Activated CD4-positive, alpha-beta memory T cell treated with anti-CD3 and anti-CD28 coated beads, Interleukin-2, amount 10 ng/mL, durations not matched to agents 7 days and 5 days (primary cell): ENCODE measurements at regions of chr3 and their contacts with region 1.

Region 1: GRCh38 chr3:36944012-36944640 is 728 bp downstream of the TRANK1 start:
- DNase-seq: peak; percentile 30
- H3K4me3 Mint-ChIP-seq: peak overlapping the region; percentile 74
- H3K27ac Mint-ChIP-seq: no peak overlapping the region
- H3K4me1 Mint-ChIP-seq: peaks cover 9% of the 10 kb centered on the region
- H3K27me3 Mint-ChIP-seq: peaks cover 4% of the 10 kb centered on the region

Region 2: DNA sequence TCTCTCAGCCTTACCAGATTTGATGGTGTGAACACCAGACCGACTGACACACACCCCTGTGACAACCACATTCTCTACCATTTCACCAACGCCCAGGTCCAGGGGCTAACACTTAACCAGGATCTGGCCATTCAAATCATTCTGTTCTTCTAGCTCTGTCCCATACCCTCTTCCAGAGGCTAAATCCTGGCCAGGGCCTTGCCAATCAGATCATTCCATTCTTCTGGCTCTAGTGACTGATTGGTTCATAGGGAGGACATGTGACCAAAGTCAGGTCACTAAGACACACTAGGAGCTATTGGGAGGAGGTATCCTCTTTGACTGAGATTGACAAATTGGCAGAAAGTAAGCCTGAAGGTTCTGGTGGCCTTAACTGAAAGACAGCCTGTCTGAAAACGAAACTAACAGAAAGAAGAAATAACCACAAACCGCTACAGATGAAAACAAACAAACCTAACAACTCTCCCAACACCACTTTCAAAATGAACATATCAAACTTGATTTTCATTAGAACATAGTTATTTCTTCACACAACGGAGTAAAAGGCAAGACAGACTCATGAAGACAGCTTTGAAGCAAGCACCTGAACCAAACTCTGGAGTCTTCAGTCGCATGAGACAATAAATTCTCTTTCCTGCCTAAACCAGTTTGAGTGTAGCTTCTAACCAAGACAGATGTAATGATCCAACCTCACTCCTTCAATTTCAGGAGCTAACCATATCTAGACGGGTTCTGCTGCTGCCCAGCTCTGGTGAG is 67.8 kb before region 1 on chr3:
- CTCF ChIA-PET with region 1: no interaction called
- POLR2A ChIA-PET with region 1: interaction called, 10 read pairs
- DNase-seq: peak; percentile 38
- H3K4me3 Mint-ChIP-seq: peak overlapping the region; percentile 60
- H3K27ac Mint-ChIP-seq: peak overlapping the region; percentile 86
- H3K4me1 Mint-ChIP-seq: peaks cover 25% of the 10 kb centered on the region
- H3K27me3 Mint-ChIP-seq: peaks cover 5% of the 10 kb centered on the region